ENCODE measurements at regions of chr1 and their contacts with region 1.

Region 1: DNA sequence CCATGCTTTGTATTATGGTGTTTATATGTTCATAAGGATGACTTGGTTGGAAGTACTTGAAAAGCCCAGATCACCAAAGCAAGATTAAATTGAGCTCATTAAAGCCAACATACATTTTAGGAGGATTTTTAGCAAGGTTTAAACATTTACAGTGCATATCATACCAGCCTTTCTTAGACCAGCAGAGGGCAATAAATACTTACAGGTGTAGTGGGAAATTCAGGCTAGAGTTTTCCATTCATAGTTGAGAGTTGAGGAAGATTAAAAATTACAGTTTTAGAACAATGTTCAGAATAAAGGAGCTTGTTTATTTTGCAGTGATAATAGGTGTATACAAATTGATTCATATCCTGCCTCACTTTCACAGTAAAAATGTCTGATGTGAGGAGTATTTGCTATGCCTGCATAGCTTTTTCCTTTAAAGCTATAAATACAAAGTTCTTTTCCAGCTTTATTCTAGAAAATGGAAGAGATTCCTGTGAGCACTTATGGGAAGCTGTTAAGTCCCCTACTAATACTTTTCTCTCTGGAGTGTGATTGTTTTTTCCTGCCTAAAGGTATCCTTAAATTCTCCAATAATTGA is 35.3 kb downstream of the DTL start:
- DNase-seq: peak; percentile 79
- H3K4me3 ChIP-seq: no peak overlapping the region
- H3K27ac ChIP-seq: no peak overlapping the region
- H3K4me1 ChIP-seq: no peaks in the 10 kb centered on the region
- H3K27me3 ChIP-seq: no peaks in the 10 kb centered on the region

Region 2: GRCh38 chr1:211667065-211667617 is 403.7 kb before region 1 on chr1:
- in situ Hi-C with region 1: no loop called
- DNase-seq: no peak
- H3K4me3 ChIP-seq: no peak overlapping the region
- H3K27ac ChIP-seq: no peak overlapping the region
- H3K4me1 ChIP-seq: no peaks in the 10 kb centered on the region
- H3K27me3 ChIP-seq: no peaks in the 10 kb centered on the region

Region 3: GRCh38 chr1:211885747-211886522 is 184.9 kb before region 1 on chr1:
- in situ Hi-C with region 1: no loop called
- DNase-seq: no peak
- H3K4me3 ChIP-seq: no peak overlapping the region
- H3K27ac ChIP-seq: no peak overlapping the region
- H3K4me1 ChIP-seq: no peaks in the 10 kb centered on the region
- H3K27me3 ChIP-seq: no peaks in the 10 kb centered on the region; the same call in 1 of the 2 replicates

Region 4: GRCh38 chr1:212368073-212368484 is 297.3 kb after region 1 on chr1:
- in situ Hi-C with region 1: loop called (anchors 5 kb)
- DNase-seq: peak; percentile 84
- H3K4me3 ChIP-seq: no peak overlapping the region
- H3K27ac ChIP-seq: no peak overlapping the region
- H3K4me1 ChIP-seq: peaks cover 9% of the 10 kb centered on the region
- H3K27me3 ChIP-seq: no peaks in the 10 kb centered on the region

Measured in GM23248 (cell line).